ENCODE measurements at regions of chrX and their contacts with region 1.

Region 1: GRCh38 chrX:18994738-18995137 is 10.8 kb upstream of the PHKA2 start:
- DNase-seq: peak; percentile 13 to 70
- ATAC-seq: peak; percentile 89 to 94
- H3K4me3 ChIP-seq: peak overlapping the region; percentile 12; the same call in 1 of the 3 replicates
- H3K27ac ChIP-seq: peak overlapping the region; percentile 80
- H3K4me1 ChIP-seq: peaks cover 72% of the 10 kb centered on the region
- CTCF ChIP-seq: no peak
- EP300 ChIP-seq: peak; percentile 28 to 43; a peak in 1 of 5 replicates
- POLR2A ChIP-seq: no peak
- RAD21 ChIP-seq: no peak

Region 2: DNA sequence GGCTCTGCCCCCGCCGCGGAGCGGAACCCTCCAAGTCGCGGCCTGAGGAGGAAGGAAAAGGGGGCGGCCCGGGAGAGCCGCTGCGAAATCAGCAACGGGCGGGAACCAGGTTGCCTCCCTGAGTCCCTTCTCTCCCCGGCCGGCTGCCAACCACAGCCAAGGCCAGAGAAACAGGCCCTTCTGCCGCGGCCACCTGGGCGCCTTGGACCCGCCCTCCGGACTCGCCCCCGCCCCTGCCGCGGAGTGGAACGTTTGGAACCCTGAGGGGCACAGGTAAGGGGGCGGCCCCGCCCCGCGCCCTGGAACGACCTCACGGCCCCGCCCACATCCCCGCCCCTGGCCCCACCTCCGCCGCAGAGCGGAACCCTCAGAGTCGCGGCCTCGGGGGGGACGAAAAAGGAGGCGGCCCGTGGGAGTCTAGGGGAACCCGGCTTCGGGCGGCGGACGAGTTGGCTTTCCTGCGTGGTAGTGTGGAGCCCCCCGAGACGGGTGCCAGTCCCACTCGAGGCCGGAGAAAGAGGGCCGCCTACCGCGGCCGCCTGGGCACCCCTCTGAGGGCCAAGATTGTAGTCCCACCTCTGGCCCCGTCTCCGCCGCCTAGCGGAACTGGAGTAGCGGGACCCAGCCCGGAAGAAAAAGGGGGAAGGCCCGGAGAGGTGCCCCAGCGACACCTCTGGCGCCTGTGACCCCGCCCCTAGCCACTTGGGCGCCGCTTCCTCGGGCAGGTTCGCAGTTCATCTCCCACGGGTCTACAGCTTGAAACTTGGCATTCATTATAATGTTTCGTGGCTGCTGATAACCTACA is 10.2 kb before region 1 on chrX:
- CTCF ChIA-PET with region 1: no interaction called
- POLR2A ChIA-PET with region 1: interaction called, 14 read pairs
- DNase-seq: peak; percentile 81 to 86
- ATAC-seq: peak; percentile 93 to 94
- H3K4me3 ChIP-seq: peak overlapping the region; percentile 82
- H3K27ac ChIP-seq: peak overlapping the region; percentile 96 to 99
- H3K4me1 ChIP-seq: peaks cover 24% of the 10 kb centered on the region
- CTCF ChIP-seq: peak; percentile 25; the same call in 2 of the 3 replicates
- EP300 ChIP-seq: no peak; a peak in 1 of 5 replicates
- POLR2A ChIP-seq: peak; percentile 35
- RAD21 ChIP-seq: no peak; a peak in 1 of 5 replicates

Region 3: GRCh38 chrX:19904778-19905367 is 910.1 kb after region 1 on chrX:
- CTCF ChIA-PET with region 1: no interaction called
- POLR2A ChIA-PET with region 1: no interaction called
- DNase-seq: peak; percentile 58 to 60
- ATAC-seq: peak; percentile 85 to 88
- H3K4me3 ChIP-seq: no peak overlapping the region
- H3K27ac ChIP-seq: no peak overlapping the region
- H3K4me1 ChIP-seq: peaks cover 6% of the 10 kb centered on the region; the same call in 2 of the 3 replicates
- CTCF ChIP-seq: peak; percentile 72
- EP300 ChIP-seq: no peak
- POLR2A ChIP-seq: no peak
- RAD21 ChIP-seq: peak; percentile 79 to 83